Heart left ventricle (tissue), 16 donors: ENCODE measurements at regions of chr21 and their contacts with region 1.

Region 1: GRCh38 chr21:46635324-46636172 is at the start of gene PRMT2:
- DNase-seq: peak; percentile 97 to 100 (median 99)
- ATAC-seq: peak; percentile 94 to 98 (median 96)
- H3K4me3 ChIP-seq: peak within 1 kb of the TSS; percentile 65 to 99 (median 84)
- H3K27ac ChIP-seq: peak within 1 kb of the TSS; percentile 90 to 99 (median 98)
- H3K4me1 ChIP-seq: peaks cover 0 to 51% (median 39%) of the 10 kb centered on the region in 12 donors
- H3K27me3 ChIP-seq: no peaks in the 10 kb centered on the region
- CTCF ChIP-seq: no peak
- POLR2A ChIP-seq: peak in 1 of 2 donors; percentile 93
- total RNA-seq, gene PRMT2: 35.1 to 74.8 (median 56.4) TPM

Region 2: DNA sequence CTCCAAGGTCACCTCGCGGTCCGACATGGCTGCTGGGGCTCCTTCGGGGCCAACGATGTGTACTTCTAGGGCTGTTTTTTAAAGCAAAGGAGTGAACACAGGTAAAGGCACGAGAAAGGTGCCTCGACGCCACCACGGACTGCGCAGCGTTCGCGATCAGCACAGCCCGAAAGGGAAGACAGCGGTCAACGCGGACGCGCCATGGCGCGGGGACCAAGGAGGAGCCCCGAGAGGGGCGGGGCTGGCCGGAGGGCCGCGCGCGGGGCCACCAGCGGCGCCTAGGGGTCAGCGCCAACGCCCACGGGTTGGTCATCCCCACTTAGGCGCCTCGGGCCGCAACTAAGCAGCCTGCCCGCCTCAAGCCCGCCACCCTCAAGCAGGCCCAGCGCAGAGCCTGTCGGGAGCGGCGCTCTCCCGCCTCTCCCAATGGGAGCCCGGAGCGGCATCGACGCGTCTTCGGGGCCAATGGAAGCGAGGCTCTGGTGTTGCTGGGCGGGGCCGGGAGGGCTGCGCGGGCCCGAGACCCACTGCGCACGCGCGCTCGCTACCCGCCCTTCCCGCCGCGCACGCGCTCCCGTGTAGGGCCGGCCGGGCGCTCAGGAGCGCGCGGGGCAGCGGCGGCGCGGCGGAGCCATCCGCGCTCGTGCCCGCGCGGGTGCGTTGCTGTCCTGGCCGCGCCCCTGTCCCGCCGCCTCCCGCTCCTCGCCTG is 177.1 kb before region 1 on chr21 and contains the start of gene DIP2A:
- intact Hi-C with region 1: loop called in 1 of 10 experiments (anchors 1 kb)
- DNase-seq: peak; percentile 96 to 99 (median 98)
- ATAC-seq: peak; percentile 95 to 98 (median 96)
- H3K4me3 ChIP-seq: peak within 1 kb of the TSS; percentile 77 to 100 (median 97)
- H3K27ac ChIP-seq: peak within 1 kb of the TSS; percentile 92 to 100 (median 96)
- H3K4me1 ChIP-seq: peaks cover 3 to 74% (median 47%) of the 10 kb centered on the region in 12 donors
- H3K27me3 ChIP-seq: no peaks in the 10 kb centered on the region
- CTCF ChIP-seq: peak in 2 of 12 donors; percentile 17 to 27
- POLR2A ChIP-seq: peak; percentile 87 to 98
- total RNA-seq, gene DIP2A: 17.1 to 31.9 (median 22.6) TPM

Region 3: DNA sequence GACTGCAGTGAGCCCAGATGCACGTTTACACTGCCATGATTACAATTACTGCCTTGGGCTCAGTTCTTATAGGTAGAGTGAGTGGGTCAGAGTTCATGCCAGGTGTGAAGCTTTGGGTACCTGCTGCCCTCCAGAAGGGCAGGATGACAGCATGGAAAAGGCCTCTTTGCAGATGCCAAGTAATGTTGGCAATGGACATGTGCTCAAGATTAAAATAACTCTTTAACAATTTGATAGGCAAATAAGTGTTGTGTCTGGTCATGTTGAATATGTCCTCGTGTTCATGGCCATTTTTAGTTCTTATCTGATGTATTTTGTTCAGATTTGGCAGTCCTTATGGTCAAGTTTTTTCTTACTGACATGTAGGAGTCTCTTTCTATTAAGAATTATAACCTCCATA is 65.4 kb before region 1 on chr21:
- intact Hi-C with region 1: loop called in 1 of 10 experiments (anchors 2 kb)
- DNase-seq: peak in 1 of 5 donors; percentile 22
- ATAC-seq: peak; percentile 62 to 82 (median 78)
- H3K4me3 ChIP-seq: no peak overlapping the region
- H3K27ac ChIP-seq: peak overlapping the region in 10 of 12 donors; percentile 9 to 73 (median 36)
- H3K4me1 ChIP-seq: peaks cover 0 to 18% (median 0%) of the 10 kb centered on the region in 12 donors
- H3K27me3 ChIP-seq: no peaks in the 10 kb centered on the region
- CTCF ChIP-seq: no peak
- POLR2A ChIP-seq: no peak

Region 4: GRCh38 chr21:46598581-46599572 is 36.7 kb before region 1 on chr21:
- intact Hi-C with region 1: loop called in 1 of 10 experiments (anchors 2 kb)
- DNase-seq: peak in 4 of 5 donors; percentile 43 to 68 (median 50)
- ATAC-seq: peak; percentile 55 to 87 (median 70)
- H3K4me3 ChIP-seq: no peak overlapping the region
- H3K27ac ChIP-seq: peak overlapping the region in 7 of 12 donors; percentile 3 to 59 (median 29)
- H3K4me1 ChIP-seq: peaks cover 0 to 22% (median 13%) of the 10 kb centered on the region in 12 donors
- H3K27me3 ChIP-seq: no peaks in the 10 kb centered on the region
- CTCF ChIP-seq: no peak
- POLR2A ChIP-seq: no peak